ENCODE measurements at regions of chr1 and their contacts with region 1.

Region 1: GRCh38 chr1:31961536-31961935 is 23.4 kb upstream of the PTP4A2 start:
- DNase-seq: no peak
- H3K4me3 Mint-ChIP-seq: no peak overlapping the region
- H3K27ac Mint-ChIP-seq: no peak overlapping the region
- H3K4me1 Mint-ChIP-seq: peaks cover 42% of the 10 kb centered on the region
- H3K27me3 Mint-ChIP-seq: no peaks in the 10 kb centered on the region
- CTCF ChIP-seq: no peak

Region 2: GRCh38 chr1:31781756-31782371 is 179.7 kb before region 1 on chr1:
- CTCF ChIA-PET with region 1: no interaction called
- intact Hi-C with region 1: no loop called
- DNase-seq: no peak
- H3K4me3 Mint-ChIP-seq: no peak overlapping the region
- H3K27ac Mint-ChIP-seq: no peak overlapping the region
- H3K4me1 Mint-ChIP-seq: no peaks in the 10 kb centered on the region
- H3K27me3 Mint-ChIP-seq: peaks cover 24% of the 10 kb centered on the region
- CTCF ChIP-seq: no peak

Region 3: GRCh38 chr1:31866450-31867032 is 95.0 kb before region 1 on chr1:
- CTCF ChIA-PET with region 1: no interaction called
- intact Hi-C with region 1: no loop called
- DNase-seq: no peak
- H3K4me3 Mint-ChIP-seq: no peak overlapping the region
- H3K27ac Mint-ChIP-seq: no peak overlapping the region
- H3K4me1 Mint-ChIP-seq: no peaks in the 10 kb centered on the region
- H3K27me3 Mint-ChIP-seq: no peaks in the 10 kb centered on the region
- CTCF ChIP-seq: no peak

Region 4: GRCh38 chr1:31977385-31978131 is 16.0 kb after region 1 on chr1:
- CTCF ChIA-PET with region 1: interaction called, 11 read pairs
- intact Hi-C with region 1: no loop called
- DNase-seq: peak; percentile 16
- H3K4me3 Mint-ChIP-seq: no peak overlapping the region
- H3K27ac Mint-ChIP-seq: no peak overlapping the region
- H3K4me1 Mint-ChIP-seq: no peaks in the 10 kb centered on the region
- H3K27me3 Mint-ChIP-seq: no peaks in the 10 kb centered on the region
- CTCF ChIP-seq: peak; percentile 28

Region 5: GRCh38 chr1:32111789-32112188 is 150.3 kb after region 1 on chr1:
- CTCF ChIA-PET with region 1: no interaction called
- intact Hi-C with region 1: no loop called
- DNase-seq: no peak
- H3K4me3 Mint-ChIP-seq: no peak overlapping the region
- H3K27ac Mint-ChIP-seq: no peak overlapping the region
- H3K4me1 Mint-ChIP-seq: peaks cover 18% of the 10 kb centered on the region
- H3K27me3 Mint-ChIP-seq: no peaks in the 10 kb centered on the region
- CTCF ChIP-seq: no peak

Measured in Calu3 (cell line).